ENCODE measurements at regions of chr12 and their contacts with region 1.

Region 1: DNA sequence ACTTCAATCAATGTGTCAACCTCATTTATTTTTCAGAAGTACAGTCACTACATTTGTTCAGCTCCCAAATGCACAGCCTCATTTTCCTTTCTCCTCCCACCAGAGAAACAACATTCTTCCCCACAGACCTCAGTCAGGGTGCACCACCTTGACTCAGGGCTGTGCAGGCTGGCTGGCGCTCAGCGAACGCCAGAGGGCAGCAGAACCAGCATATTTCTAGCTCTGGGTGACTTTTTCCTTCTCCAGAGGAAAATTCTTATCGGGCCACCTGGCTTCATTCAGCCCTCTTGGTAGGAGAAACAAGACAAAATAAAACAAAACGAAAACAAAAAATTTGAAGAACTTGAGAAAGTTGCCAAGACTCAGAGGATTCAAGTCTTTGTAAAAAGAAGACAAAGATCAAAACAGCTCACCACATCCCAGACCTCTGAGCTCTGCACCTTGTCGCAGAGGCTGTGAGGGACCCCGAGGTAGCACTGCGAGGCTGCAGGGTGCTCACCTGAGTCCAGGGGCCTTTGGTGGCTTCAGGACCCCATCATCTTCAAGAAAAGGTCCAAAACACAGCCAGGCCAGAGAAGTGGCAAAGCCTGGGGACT is 33.7 kb downstream of the PAH start:
- DNase-seq: peak in 4 of 5 donors; percentile 26 to 66 (median 34)
- ATAC-seq: peak in 2 of 4 donors; percentile 67 to 68
- H3K4me3 ChIP-seq: no peak overlapping the region
- H3K27ac ChIP-seq: no peak overlapping the region
- H3K4me1 ChIP-seq: no peaks in the 10 kb centered on the region
- H3K27me3 ChIP-seq: peaks cover 0 to 25% (median 0%) of the 10 kb centered on the region in 9 donors
- CTCF ChIP-seq: peak; percentile 49 to 79 (median 66)
- POLR2A ChIP-seq: no peak

Region 2: GRCh38 chr12:103540319-103540718 is 657.0 kb after region 1 on chr12:
- intact Hi-C with region 1: loop called in 8 of 10 experiments (anchors 2 to 5 kb)
- DNase-seq: no peak
- ATAC-seq: no peak
- H3K4me3 ChIP-seq: no peak overlapping the region
- H3K27ac ChIP-seq: no peak overlapping the region
- H3K4me1 ChIP-seq: no peaks in the 10 kb centered on the region
- H3K27me3 ChIP-seq: peaks cover 0 to 3% (median 0%) of the 10 kb centered on the region in 9 donors
- CTCF ChIP-seq: no peak
- POLR2A ChIP-seq: no peak

Region 3: GRCh38 chr12:103548622-103549601 is 665.6 kb after region 1 on chr12:
- intact Hi-C with region 1: loop called in 9 of 10 experiments (anchors 1 to 5 kb)
- DNase-seq: peak in 4 of 5 donors; percentile 35 to 55 (median 37)
- ATAC-seq: peak in 2 of 4 donors; percentile 50 to 59
- H3K4me3 ChIP-seq: no peak overlapping the region
- H3K27ac ChIP-seq: no peak overlapping the region
- H3K4me1 ChIP-seq: no peaks in the 10 kb centered on the region
- H3K27me3 ChIP-seq: peaks cover 0 to 30% (median 0%) of the 10 kb centered on the region in 9 donors
- CTCF ChIP-seq: peak; percentile 51 to 82 (median 75)
- POLR2A ChIP-seq: no peak